GM23248 (cell line): ENCODE measurements at regions of chr2 and their contacts with region 1.

Region 1: GRCh38 chr2:171811245-171811628 is 82.8 kb downstream of the SLC25A12 start:
- DNase-seq: peak; percentile 56
- H3K4me3 ChIP-seq: no peak overlapping the region
- H3K27ac ChIP-seq: no peak overlapping the region
- H3K4me1 ChIP-seq: peaks cover 9% of the 10 kb centered on the region; the same call in 1 of the 2 replicates
- H3K27me3 ChIP-seq: no peaks in the 10 kb centered on the region

Region 2: DNA sequence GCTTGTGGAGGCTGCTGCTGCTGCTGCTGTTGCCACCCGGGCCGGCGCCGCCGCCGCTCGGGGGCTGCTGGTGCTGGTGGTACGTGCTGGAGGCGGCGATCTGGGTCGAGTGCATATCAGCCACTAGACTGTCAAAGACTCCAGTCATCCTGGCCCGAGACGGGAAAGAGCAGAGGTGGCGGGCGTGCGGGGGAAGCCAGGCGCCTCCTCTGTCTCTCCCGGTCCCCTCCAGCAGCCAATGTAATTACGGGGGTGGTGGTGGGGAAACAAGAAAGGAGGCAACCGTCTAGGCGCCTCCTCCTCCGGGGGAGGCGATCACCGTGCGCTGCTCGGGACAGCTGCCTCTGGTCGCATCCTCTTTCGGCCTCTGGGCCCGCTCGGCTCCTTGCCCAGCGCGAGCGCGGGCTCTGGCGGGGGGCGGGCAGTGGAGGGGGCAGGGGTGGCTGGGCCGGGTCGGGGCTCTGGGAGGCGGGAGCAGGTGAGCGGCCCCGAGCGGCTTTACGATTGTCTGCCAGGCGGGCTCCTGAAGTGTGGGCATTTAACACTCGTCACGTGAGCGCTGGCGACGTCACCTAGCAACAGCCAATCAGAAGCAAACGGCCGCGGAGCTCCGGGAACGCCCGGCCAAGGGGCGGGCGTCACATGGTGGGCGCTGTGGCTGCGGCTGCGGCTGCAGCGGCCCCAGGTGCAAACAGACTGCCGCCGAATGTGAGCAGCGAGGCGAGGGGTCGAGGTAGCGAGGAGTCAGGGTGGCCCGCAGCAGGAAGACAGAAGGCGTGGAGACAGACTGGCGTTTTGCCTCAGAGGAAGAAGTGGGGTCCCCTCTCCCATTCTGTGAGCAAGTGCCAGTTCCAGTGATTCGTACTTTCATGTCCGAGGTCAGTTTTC is 291.4 kb after region 1 on chr2 and contains the start of gene DLX2:
- in situ Hi-C with region 1: loop called (anchors 10 kb)
- DNase-seq: peak; percentile 97
- H3K4me3 ChIP-seq: peak within 1 kb of the TSS; percentile 83
- H3K27ac ChIP-seq: peak within 1 kb of the TSS; percentile 98
- H3K4me1 ChIP-seq: peaks cover 20% of the 10 kb centered on the region
- H3K27me3 ChIP-seq: no peaks in the 10 kb centered on the region
- total RNA-seq, gene DLX2: 2.8 and 4.7 TPM in 2 replicates